Common myeloid progenitor, CD34-positive (primary cell): ENCODE measurements at regions of chr15 and their contacts with region 1.

Region 1: GRCh38 chr15:31977812-31978661 is 52.3 kb upstream of the CHRNA7 start:
- DNase-seq: peak; percentile 56 to 67 (median 62)
- H3K4me3 ChIP-seq: no peak overlapping the region
- H3K27ac ChIP-seq: no peak overlapping the region
- H3K4me1 ChIP-seq: peaks cover 0 to 17% (median 9%) of the 10 kb centered on the region in 4 experiments
- H3K27me3 ChIP-seq: peaks cover 0 to 12% (median 0%) of the 10 kb centered on the region in 5 experiments

Region 2: GRCh38 chr15:31905054-31905453 is 73.0 kb before region 1 on chr15:
- CTCF ChIA-PET with region 1: no interaction called
- POLR2A ChIA-PET with region 1: no interaction called
- DNase-seq: no peak
- H3K4me3 ChIP-seq: peak overlapping the region in 1 of 7 experiments; percentile 50
- H3K27ac ChIP-seq: no peak overlapping the region
- H3K4me1 ChIP-seq: peaks cover 0 to 9% (median 1%) of the 10 kb centered on the region in 4 experiments
- H3K27me3 ChIP-seq: no peaks in the 10 kb centered on the region

Region 3: DNA sequence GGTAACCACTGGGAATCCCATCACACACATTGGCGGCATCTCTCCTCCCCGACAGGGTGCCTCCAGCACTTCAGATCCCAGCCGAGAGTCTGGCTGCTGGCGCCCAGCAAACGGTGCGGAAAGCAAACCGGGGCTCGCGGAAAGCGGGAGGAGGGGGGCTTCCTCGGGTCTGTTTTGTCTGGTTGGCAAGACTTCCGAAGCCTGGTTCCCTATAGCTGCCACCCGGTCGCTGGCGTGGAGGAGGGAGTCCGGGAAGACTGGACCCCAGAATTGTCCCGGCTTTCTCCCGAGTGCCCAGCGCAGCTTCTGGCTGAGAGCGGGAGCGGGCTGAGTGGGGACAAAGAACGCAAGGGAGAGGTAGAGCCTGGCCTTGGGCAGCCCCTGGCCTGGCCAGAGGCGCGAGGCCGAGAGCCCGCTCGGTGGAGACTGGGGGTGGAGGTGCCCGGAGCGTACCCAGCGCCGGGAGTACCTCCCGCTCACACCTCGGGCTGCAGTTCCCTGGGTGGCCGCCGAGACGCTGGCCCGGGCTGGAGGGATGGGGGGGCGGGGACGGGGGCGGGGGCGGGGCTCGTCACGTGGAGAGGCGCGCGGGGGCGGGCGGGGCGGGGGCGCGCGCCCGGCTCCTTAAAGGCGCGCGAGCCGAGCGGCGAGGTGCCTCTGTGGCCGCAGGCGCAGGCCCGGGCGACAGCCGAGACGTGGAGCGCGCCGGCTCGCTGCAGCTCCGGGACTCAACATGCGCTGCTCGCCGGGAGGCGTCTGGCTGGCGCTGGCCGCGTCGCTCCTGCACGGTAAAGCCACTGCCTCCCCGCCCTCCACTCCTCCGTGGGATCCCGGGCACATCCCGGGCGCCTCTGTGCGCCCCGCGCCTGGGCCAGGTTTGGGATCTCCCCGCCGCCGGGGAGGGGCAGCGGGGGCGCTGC is 52.1 kb after region 1 on chr15 and contains the start of gene CHRNA7:
- CTCF ChIA-PET with region 1: interaction called, 13 read pairs
- POLR2A ChIA-PET with region 1: no interaction called
- DNase-seq: peak; percentile 61 to 88 (median 84)
- H3K4me3 ChIP-seq: peak within 1 kb of the TSS; percentile 46 to 83 (median 71)
- H3K27ac ChIP-seq: no peak within 1 kb of the TSS
- H3K4me1 ChIP-seq: peaks cover 3 to 25% (median 15%) of the 10 kb centered on the region in 4 experiments
- H3K27me3 ChIP-seq: peaks cover 7 to 26% (median 17%) of the 10 kb centered on the region in 5 experiments